K562 (cell line): ENCODE measurements at regions of chr6 and their contacts with region 1.

Region 1: DNA sequence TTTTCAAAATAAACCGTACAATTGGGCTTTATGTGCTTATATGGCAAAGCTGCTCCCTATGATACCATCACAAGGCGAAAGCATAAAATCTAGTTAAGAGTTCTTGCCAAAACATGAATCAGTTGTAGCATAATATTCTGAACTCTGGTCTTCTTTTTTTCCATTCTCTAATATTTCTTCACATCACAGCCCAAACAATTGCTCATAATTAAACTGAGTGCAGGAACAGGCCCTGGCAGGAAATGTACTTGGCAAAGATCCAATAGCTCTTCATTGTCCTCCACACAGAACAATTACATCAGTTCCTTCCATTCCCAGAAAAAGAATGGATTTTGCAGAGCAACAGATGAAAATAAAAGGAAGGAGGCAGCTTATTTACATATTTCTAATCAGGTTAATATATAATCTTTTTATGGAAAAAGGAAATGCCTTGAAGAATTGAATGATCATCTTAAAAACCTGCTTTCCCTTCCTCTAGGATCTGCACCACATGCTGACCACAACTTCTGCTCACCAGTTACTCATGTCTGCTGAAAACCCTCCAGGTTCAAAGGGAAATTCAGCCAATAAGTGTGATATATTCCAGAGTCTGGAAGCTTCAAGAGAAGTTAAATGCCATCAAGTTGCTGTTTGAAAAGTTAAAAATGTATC is 123.3 kb upstream of the COL21A1 start:
- DNase-seq: no peak
- ATAC-seq: no peak
- H3K4me3 ChIP-seq: no peak overlapping the region
- H3K27ac ChIP-seq: no peak overlapping the region
- H3K4me1 ChIP-seq: no peaks in the 10 kb centered on the region; a peak in 2 of 5 replicates
- H3K27me3 ChIP-seq: peaks cover 2 to 5% of the 10 kb centered on the region in 2 experiments; a peak in 1 of 5 replicates
- CTCF ChIP-seq: no peak
- EP300 ChIP-seq: no peak
- POLR2A ChIP-seq: no peak
- RAD21 ChIP-seq: no peak

Region 2: GRCh38 chr6:56310241-56310640 is 60.4 kb before region 1 on chr6:
- CTCF ChIA-PET with region 1: no interaction called
- POLR2A ChIA-PET with region 1: no interaction called
- in situ Hi-C with region 1: no loop called
- intact Hi-C with region 1: no loop called
- DNase-seq: no peak
- ATAC-seq: no peak
- H3K4me3 ChIP-seq: no peak overlapping the region
- H3K27ac ChIP-seq: no peak overlapping the region
- H3K4me1 ChIP-seq: no peaks in the 10 kb centered on the region
- H3K27me3 ChIP-seq: no peaks in the 10 kb centered on the region
- CTCF ChIP-seq: no peak
- EP300 ChIP-seq: no peak
- POLR2A ChIP-seq: no peak
- RAD21 ChIP-seq: no peak

Region 3: GRCh38 chr6:56549014-56549413 is 178.3 kb after region 1 on chr6:
- CTCF ChIA-PET with region 1: interaction called, 3 read pairs
- POLR2A ChIA-PET with region 1: no interaction called
- in situ Hi-C with region 1: no loop called
- intact Hi-C with region 1: loop called (anchors 2 kb)
- DNase-seq: peak in 1 of 4 experiments; percentile 19
- ATAC-seq: peak; percentile 78
- H3K4me3 ChIP-seq: no peak overlapping the region
- H3K27ac ChIP-seq: no peak overlapping the region
- H3K4me1 ChIP-seq: 0 out of 5 replicates have a peak, but pooled peaks cover 0 to 4% of the 10 kb centered on the region in 2 experiments
- H3K27me3 ChIP-seq: no peaks in the 10 kb centered on the region
- CTCF ChIP-seq: peak in 2 of 3 experiments; percentile 29 to 60; a peak in 3 of 6 replicates
- EP300 ChIP-seq: no peak
- POLR2A ChIP-seq: no peak
- RAD21 ChIP-seq: peak; percentile 71 to 90

Region 4: DNA sequence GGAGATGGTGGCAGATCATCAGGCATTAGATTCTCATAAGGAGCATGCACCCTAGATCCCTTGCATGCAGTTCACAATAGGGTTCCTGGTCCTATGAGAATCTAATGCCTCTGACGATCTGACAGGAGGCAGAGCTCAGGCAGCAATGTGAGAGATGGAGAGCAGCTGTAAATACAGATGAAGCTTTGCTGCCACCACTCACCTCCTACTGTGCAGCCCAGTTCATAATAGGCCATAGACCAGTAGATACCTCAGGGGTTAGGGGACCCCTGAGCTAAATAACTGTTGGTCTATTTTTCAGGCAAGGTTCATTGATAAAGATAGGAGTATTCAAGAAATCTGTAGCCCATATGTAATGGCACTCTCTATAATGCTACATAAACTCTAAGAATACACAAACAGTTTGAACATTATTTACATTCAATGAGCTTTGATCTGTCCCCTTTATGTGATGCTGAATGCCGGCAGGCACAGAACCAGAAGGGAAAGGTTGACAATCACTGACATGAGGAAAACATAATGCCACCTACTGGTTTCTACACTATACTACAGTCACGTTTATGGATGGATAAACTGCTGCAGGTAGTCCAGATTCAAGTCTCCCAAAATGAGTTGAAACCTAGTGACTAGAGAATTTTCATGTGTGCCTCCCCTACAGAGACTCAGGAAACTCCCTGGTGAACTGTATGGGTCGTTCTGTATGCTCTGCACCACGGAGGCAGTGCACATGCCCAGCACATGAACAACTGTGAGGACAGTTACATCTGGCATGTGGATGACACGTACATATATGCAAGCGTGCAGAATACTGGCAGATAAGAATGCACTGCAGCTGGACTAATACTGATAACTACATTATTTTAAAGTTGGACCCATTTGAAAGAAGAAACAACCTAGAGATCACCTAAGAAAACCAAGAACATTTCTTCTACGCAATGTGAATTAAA is 200.0 kb after region 1 on chr6:
- CTCF ChIA-PET with region 1: no interaction called
- POLR2A ChIA-PET with region 1: no interaction called
- in situ Hi-C with region 1: no loop called
- intact Hi-C with region 1: loop called (anchors 2 kb)
- DNase-seq: peak in 2 of 4 experiments; percentile 38 to 39
- ATAC-seq: peak; percentile 89
- H3K4me3 ChIP-seq: no peak overlapping the region
- H3K27ac ChIP-seq: no peak overlapping the region
- H3K4me1 ChIP-seq: no peaks in the 10 kb centered on the region
- H3K27me3 ChIP-seq: no peaks in the 10 kb centered on the region
- CTCF ChIP-seq: peak; percentile 32 to 62 (median 60)
- EP300 ChIP-seq: no peak
- POLR2A ChIP-seq: no peak
- RAD21 ChIP-seq: peak; percentile 25 to 69; a peak in 3 of 4 replicates